Activated naive CD4-positive, alpha-beta T cell treated with anti-CD3 and anti-CD28 coated beads, Interleukin-2, amount 10 ng/mL, durations not matched to agents 7 days and 5 days (primary cell): ENCODE measurements at regions of chr6 and their contacts with region 1.

Region 1: DNA sequence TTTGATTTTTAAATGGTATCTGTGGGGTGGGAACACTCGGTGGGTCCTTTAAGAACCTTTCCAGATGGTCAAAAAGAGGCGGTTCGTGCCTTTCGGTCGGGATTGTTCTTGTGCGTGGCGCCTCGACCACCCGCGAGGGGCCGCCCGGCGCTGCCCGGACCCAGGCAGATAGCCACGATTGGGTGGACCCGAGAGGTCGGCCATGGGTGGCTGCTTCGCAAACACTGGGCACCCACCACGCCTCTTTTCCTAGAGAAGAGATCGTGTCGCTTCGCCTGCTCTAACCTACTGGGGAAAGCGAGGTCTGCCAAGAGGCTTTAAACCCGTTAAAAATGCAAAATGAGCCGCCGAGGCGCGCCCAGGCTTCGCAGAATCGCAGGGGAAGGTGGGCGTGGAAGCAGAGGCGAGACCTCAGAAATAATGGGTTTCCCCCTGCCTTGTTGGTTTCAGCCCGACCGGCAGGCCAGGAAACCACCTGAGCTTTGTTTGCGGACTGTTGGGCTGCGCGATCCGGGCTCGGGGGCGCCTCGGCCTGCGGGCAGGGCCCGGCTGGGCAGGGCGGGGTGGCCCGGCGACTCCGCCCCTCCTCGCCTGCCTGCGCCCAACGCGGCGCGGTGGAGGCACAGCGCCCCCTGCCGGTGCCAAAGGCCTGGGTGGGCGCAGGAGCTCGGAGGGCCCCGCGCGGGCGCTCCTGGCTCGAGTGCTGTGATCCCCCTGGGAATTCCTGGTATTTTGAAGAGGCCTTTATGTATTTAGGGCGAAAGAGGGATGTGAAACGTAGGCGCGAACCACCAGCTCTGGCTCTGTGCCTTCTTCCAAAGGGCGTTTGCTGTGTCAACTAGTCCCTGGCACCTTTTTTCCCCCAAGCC is 1.6 kb downstream of the MARCKS start:
- DNase-seq: peak; percentile 71
- H3K4me3 Mint-ChIP-seq: peak overlapping the region; percentile 51
- H3K27ac Mint-ChIP-seq: no peak overlapping the region
- H3K4me1 Mint-ChIP-seq: peaks cover 24% of the 10 kb centered on the region
- H3K27me3 Mint-ChIP-seq: peaks cover 15% of the 10 kb centered on the region

Region 2: GRCh38 chr6:113306552-113307145 is 552.1 kb before region 1 on chr6:
- CTCF ChIA-PET with region 1: interaction called, 16 read pairs
- DNase-seq: peak; percentile 58
- H3K4me3 Mint-ChIP-seq: no peak overlapping the region
- H3K27ac Mint-ChIP-seq: no peak overlapping the region
- H3K4me1 Mint-ChIP-seq: no peaks in the 10 kb centered on the region
- H3K27me3 Mint-ChIP-seq: no peaks in the 10 kb centered on the region

Region 3: DNA sequence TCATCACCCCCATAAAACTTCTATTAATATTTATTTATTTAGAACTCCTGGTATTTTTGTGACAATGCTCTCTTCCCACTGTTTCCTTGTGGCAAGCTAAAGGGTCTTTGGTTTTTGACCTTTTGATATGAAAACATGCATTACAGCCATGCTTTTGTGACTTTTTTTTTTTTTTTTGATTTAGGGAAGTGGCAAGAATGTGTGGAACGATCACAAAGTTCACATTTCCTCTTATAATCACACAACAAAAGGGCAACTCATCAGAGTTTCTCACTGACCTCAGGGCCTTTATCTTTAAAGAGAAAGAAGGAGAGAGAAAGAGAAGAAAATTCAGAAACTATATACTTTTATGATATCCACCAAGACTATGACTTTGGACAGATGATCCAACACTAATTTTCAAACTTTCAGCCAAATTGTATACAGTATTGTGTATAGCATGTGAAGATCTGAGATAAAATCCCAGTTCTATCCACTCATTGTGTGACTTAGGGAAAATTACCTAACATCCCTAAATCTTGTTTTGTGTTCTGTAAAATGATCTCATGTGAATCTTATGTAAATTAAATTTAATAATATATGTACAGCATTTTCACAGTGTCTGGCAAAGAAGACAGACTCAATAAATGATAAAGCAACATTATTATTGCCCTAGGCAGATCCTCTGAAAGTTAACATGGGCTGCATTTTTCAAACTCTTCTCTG is 108.4 kb before region 1 on chr6:
- CTCF ChIA-PET with region 1: no interaction called
- DNase-seq: no peak
- H3K4me3 Mint-ChIP-seq: no peak overlapping the region
- H3K27ac Mint-ChIP-seq: no peak overlapping the region
- H3K4me1 Mint-ChIP-seq: no peaks in the 10 kb centered on the region
- H3K27me3 Mint-ChIP-seq: no peaks in the 10 kb centered on the region